PC-3 (cell line): ENCODE measurements at regions of chr1 and their contacts with region 1.

Region 1: GRCh38 chr1:84020151-84020550 is 21.2 kb upstream of the TTLL7 start:
- DNase-seq: peak; percentile 63
- ATAC-seq: peak; percentile 15; the same call in 1 of the 2 replicates
- H3K4me3 ChIP-seq: no peak overlapping the region
- H3K27ac ChIP-seq: no peak overlapping the region
- H3K4me1 ChIP-seq: peaks cover 14% of the 10 kb centered on the region
- H3K27me3 ChIP-seq: no peaks in the 10 kb centered on the region
- CTCF ChIP-seq: peak; percentile 27; the same call in 1 of the 2 replicates

Region 2: GRCh38 chr1:83970114-83970513 is 50.0 kb before region 1 on chr1:
- CTCF ChIA-PET with region 1: no interaction called
- POLR2A ChIA-PET with region 1: no interaction called
- intact Hi-C with region 1: no loop called
- DNase-seq: no peak
- ATAC-seq: no peak
- H3K4me3 ChIP-seq: no peak overlapping the region
- H3K27ac ChIP-seq: no peak overlapping the region
- H3K4me1 ChIP-seq: no peaks in the 10 kb centered on the region
- H3K27me3 ChIP-seq: no peaks in the 10 kb centered on the region
- CTCF ChIP-seq: no peak

Region 3: GRCh38 chr1:84069236-84069845 is 49.2 kb after region 1 on chr1:
- CTCF ChIA-PET with region 1: no interaction called
- POLR2A ChIA-PET with region 1: no interaction called
- intact Hi-C with region 1: loop called (anchors 1 kb)
- DNase-seq: peak; percentile 44
- ATAC-seq: no peak
- H3K4me3 ChIP-seq: no peak overlapping the region
- H3K27ac ChIP-seq: no peak overlapping the region
- H3K4me1 ChIP-seq: no peaks in the 10 kb centered on the region
- H3K27me3 ChIP-seq: no peaks in the 10 kb centered on the region
- CTCF ChIP-seq: no peak

Region 4: DNA sequence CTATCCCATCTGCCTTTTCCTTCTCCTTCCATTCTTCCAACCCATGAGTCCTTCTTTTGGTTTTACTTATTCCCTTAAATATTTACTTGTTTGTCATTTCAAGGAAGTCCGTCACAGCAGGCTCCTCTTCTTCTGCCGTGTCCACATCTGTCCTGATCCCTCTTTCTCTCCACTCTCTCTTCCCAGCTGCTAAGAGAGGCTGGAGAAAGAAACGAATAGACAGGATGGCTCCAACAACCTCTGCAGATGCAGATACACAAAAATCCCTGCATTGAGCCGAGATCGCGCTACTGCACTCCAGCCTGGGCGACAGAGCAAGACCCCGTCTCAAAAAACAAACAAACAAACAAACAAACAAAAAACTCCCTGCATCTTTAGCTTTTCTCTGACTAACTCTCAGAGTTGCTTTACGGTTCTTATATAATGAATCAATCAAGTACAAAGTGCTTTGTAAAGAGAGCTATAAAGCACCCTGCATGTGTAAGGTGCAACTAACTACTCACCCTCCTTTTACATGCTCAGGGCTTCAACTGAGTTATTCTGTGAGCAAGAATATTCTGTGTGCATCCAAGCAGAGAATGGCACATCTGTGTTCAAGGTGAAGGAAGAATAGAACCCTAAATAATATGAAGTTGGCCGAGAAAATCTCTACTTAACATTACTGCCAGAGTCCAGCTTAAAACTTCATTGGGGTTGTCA is 277.5 kb after region 1 on chr1:
- CTCF ChIA-PET with region 1: no interaction called
- POLR2A ChIA-PET with region 1: no interaction called
- intact Hi-C with region 1: no loop called
- DNase-seq: no peak
- ATAC-seq: no peak
- H3K4me3 ChIP-seq: peak overlapping the region; percentile 82
- H3K27ac ChIP-seq: peak overlapping the region; percentile 80
- H3K4me1 ChIP-seq: peaks cover 43% of the 10 kb centered on the region
- H3K27me3 ChIP-seq: no peaks in the 10 kb centered on the region
- CTCF ChIP-seq: no peak